ENCODE measurements at regions of chr10 and their contacts with region 1.

Region 1: GRCh38 chr10:29735596-29736318 is 101.0 kb upstream of the SVIL start:
- DNase-seq: no peak
- ATAC-seq: peak; percentile 92
- H3K4me3 ChIP-seq: peak overlapping the region; percentile 53; the same call in 1 of the 2 replicates
- H3K27ac ChIP-seq: no peak overlapping the region
- H3K4me1 ChIP-seq: no peaks in the 10 kb centered on the region
- H3K27me3 ChIP-seq: peaks cover 1 to 10% of the 10 kb centered on the region in 2 experiments
- CTCF ChIP-seq: peak; percentile 68 to 84 (median 81)
- EP300 ChIP-seq: no peak
- POLR2A ChIP-seq: no peak
- RAD21 ChIP-seq: peak; percentile 45

Region 2: DNA sequence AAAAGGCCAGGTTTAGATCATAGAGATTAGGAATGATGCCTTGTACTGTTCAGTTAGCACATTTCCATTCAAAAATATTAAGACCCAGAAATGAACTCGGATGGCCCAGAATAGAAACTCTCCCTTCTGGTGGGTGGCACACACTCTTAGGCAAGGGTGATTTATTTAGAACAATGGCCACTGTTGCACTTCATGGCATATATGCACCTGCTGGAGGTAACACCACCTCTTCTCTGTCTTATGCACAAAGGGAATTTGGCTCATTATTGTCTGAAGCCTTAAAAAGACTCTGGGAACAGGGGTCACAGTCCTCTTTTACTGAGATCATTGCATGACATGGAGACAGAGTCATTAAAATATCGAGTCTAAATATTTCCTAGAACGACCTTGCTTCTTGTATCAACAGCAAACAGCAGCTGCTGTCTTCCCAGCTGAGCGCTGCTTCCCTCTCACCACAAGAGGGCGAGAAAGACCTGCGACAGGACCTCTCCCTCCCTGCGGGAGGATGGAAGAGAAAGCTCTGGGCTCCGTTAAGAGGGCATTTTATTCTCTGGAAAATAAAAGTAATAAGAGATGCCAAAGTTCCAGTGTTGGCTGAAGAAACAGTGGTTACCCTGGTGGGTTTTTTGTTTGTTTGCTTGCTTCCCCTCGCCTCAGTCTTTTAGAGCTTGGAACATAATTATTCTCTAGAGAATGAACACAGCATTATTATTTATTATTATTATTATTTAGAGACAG is 1072.0 kb before region 1 on chr10:
- CTCF ChIA-PET with region 1: no interaction called
- POLR2A ChIA-PET with region 1: no interaction called
- RAD21 ChIA-PET with region 1: no interaction called
- SMC1A ChIA-PET with region 1: no interaction called
- in situ Hi-C with region 1: no loop called
- intact Hi-C with region 1: no loop called
- DNase-seq: no peak
- ATAC-seq: peak; percentile 97
- H3K4me3 ChIP-seq: no peak overlapping the region
- H3K27ac ChIP-seq: no peak overlapping the region
- H3K4me1 ChIP-seq: no peaks in the 10 kb centered on the region
- H3K27me3 ChIP-seq: peaks cover 2 to 5% of the 10 kb centered on the region in 2 experiments
- CTCF ChIP-seq: peak; percentile 95 to 96 (median 96)
- EP300 ChIP-seq: no peak
- POLR2A ChIP-seq: no peak
- RAD21 ChIP-seq: peak; percentile 96

Region 3: GRCh38 chr10:29443745-29444523 is 291.8 kb before region 1 on chr10:
- CTCF ChIA-PET with region 1: interaction called, 3 read pairs
- POLR2A ChIA-PET with region 1: no interaction called
- RAD21 ChIA-PET with region 1: no interaction called
- SMC1A ChIA-PET with region 1: no interaction called
- in situ Hi-C with region 1: no loop called
- intact Hi-C with region 1: loop called (anchors 5 kb)
- DNase-seq: no peak
- ATAC-seq: peak; percentile 41
- H3K4me3 ChIP-seq: no peak overlapping the region
- H3K27ac ChIP-seq: no peak overlapping the region
- H3K4me1 ChIP-seq: no peaks in the 10 kb centered on the region
- H3K27me3 ChIP-seq: no peaks in the 10 kb centered on the region
- CTCF ChIP-seq: no peak
- EP300 ChIP-seq: no peak
- POLR2A ChIP-seq: no peak
- RAD21 ChIP-seq: no peak

Region 4: GRCh38 chr10:29508554-29509244 is 227.1 kb before region 1 on chr10:
- CTCF ChIA-PET with region 1: interaction called, 13 read pairs
- POLR2A ChIA-PET with region 1: no interaction called
- RAD21 ChIA-PET with region 1: interaction called, 3 read pairs
- SMC1A ChIA-PET with region 1: no interaction called
- in situ Hi-C with region 1: no loop called
- intact Hi-C with region 1: no loop called
- DNase-seq: no peak
- ATAC-seq: no peak; the same call in 2 of the 3 replicates
- H3K4me3 ChIP-seq: no peak overlapping the region
- H3K27ac ChIP-seq: no peak overlapping the region
- H3K4me1 ChIP-seq: no peaks in the 10 kb centered on the region
- H3K27me3 ChIP-seq: no peaks in the 10 kb centered on the region
- CTCF ChIP-seq: no peak
- EP300 ChIP-seq: no peak
- POLR2A ChIP-seq: no peak
- RAD21 ChIP-seq: no peak

Region 5: GRCh38 chr10:29618341-29619171 is 117.2 kb before region 1 on chr10:
- CTCF ChIA-PET with region 1: interaction called, 4 read pairs
- POLR2A ChIA-PET with region 1: no interaction called
- RAD21 ChIA-PET with region 1: interaction called, 3 read pairs
- SMC1A ChIA-PET with region 1: interaction called, 10 read pairs
- in situ Hi-C with region 1: no loop called
- intact Hi-C with region 1: no loop called
- DNase-seq: no peak
- ATAC-seq: peak; percentile 36
- H3K4me3 ChIP-seq: no peak overlapping the region
- H3K27ac ChIP-seq: no peak overlapping the region
- H3K4me1 ChIP-seq: no peaks in the 10 kb centered on the region
- H3K27me3 ChIP-seq: no peaks in the 10 kb centered on the region
- CTCF ChIP-seq: no peak
- EP300 ChIP-seq: no peak
- POLR2A ChIP-seq: no peak
- RAD21 ChIP-seq: no peak

Region 6: DNA sequence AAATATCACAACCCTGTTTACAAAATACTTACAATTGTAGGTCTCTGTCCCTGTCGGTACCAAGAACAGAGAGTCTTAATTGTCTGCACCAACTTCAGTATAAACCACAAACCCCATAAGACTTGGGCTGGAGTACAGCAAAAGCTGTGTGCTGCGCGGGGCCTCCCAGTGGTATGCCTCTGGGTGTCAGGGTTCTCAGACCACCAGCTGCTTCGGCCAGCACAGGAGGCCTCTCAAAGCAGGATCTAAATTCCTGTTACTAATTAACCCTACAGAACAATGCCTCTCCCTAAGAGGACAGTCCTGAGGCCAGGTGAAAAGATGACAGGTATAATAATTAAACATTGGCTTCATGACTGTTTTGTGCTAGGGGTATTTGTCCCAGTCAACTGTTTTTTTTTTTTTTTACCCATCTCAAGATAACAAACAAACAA is 100.0 kb before region 1 on chr10:
- CTCF ChIA-PET with region 1: no interaction called
- POLR2A ChIA-PET with region 1: no interaction called
- RAD21 ChIA-PET with region 1: interaction called, 13 read pairs
- SMC1A ChIA-PET with region 1: interaction called, 6 read pairs
- in situ Hi-C with region 1: no loop called
- intact Hi-C with region 1: loop called (anchors 2 kb)
- DNase-seq: peak; percentile 27
- ATAC-seq: peak; percentile 86
- H3K4me3 ChIP-seq: no peak overlapping the region
- H3K27ac ChIP-seq: no peak overlapping the region
- H3K4me1 ChIP-seq: no peaks in the 10 kb centered on the region
- H3K27me3 ChIP-seq: no peaks in the 10 kb centered on the region
- CTCF ChIP-seq: no peak
- EP300 ChIP-seq: no peak
- POLR2A ChIP-seq: no peak
- RAD21 ChIP-seq: no peak

Region 7: GRCh38 chr10:29646238-29646902 is 89.4 kb before region 1 on chr10:
- CTCF ChIA-PET with region 1: interaction called, 3 read pairs
- POLR2A ChIA-PET with region 1: interaction called, 3 read pairs
- RAD21 ChIA-PET with region 1: interaction called, 5 read pairs
- SMC1A ChIA-PET with region 1: interaction called, 12 read pairs
- in situ Hi-C with region 1: no loop called
- intact Hi-C with region 1: no loop called
- DNase-seq: no peak
- ATAC-seq: peak; percentile 23
- H3K4me3 ChIP-seq: no peak overlapping the region
- H3K27ac ChIP-seq: no peak overlapping the region
- H3K4me1 ChIP-seq: no peaks in the 10 kb centered on the region
- H3K27me3 ChIP-seq: no peaks in the 10 kb centered on the region
- CTCF ChIP-seq: no peak
- EP300 ChIP-seq: no peak
- POLR2A ChIP-seq: no peak
- RAD21 ChIP-seq: no peak

Region 8: DNA sequence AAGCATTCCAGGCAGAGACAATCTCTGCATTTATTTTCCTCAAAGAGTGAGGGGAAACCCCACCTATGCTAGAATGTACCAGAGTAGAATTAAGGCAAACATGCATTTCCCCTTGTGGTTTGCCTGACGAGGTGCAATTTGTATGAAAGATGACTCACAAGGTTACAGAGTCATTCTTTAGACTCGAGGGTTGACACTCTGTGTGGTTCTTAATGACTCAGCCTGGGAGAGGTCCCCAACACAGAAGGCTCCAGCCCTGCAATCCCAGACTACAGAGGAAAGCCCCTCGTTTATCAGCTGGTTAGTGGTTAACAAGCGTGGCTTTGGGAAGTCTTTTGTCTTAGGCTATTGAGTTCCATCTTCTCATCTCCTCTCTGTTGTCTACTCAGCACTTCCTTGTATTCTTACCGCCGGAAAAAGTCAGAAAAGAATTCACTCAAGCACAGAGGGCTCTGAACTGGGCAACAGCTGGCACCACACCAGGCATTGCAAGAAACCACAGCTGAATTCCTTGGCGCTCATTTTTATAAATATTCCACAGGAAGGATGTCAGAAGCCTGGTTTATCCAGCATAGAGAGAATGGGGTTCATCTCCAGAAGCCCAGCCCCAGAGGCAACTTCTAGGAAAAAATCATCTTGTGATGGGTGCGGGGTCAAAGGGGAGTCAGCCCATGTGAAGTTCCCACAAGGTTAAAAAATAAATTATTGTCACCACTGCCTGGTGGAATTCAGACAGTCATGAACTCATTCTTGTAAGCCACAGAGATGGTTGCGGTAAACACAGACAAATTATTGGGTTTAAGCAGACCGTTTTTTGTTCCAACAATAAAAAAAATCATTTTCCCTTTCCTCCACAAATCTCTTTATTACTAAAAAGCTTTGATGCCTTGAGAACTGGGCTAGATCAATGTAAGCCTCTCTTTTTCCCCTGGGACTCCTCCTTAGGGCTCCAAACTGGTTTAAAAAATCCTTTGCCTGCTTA is 76.5 kb before region 1 on chr10:
- CTCF ChIA-PET with region 1: no interaction called
- POLR2A ChIA-PET with region 1: no interaction called
- RAD21 ChIA-PET with region 1: interaction called, 3 read pairs
- SMC1A ChIA-PET with region 1: interaction called, 3 read pairs
- in situ Hi-C with region 1: no loop called
- intact Hi-C with region 1: loop called (anchors 1 kb)
- DNase-seq: peak; percentile 92
- ATAC-seq: peak; percentile 97
- H3K4me3 ChIP-seq: no peak overlapping the region
- H3K27ac ChIP-seq: no peak overlapping the region
- H3K4me1 ChIP-seq: no peaks in the 10 kb centered on the region
- H3K27me3 ChIP-seq: no peaks in the 10 kb centered on the region
- CTCF ChIP-seq: no peak
- EP300 ChIP-seq: peak; percentile 88 to 97; a peak in 3 of 4 replicates
- POLR2A ChIP-seq: no peak
- RAD21 ChIP-seq: no peak

Region 9: DNA sequence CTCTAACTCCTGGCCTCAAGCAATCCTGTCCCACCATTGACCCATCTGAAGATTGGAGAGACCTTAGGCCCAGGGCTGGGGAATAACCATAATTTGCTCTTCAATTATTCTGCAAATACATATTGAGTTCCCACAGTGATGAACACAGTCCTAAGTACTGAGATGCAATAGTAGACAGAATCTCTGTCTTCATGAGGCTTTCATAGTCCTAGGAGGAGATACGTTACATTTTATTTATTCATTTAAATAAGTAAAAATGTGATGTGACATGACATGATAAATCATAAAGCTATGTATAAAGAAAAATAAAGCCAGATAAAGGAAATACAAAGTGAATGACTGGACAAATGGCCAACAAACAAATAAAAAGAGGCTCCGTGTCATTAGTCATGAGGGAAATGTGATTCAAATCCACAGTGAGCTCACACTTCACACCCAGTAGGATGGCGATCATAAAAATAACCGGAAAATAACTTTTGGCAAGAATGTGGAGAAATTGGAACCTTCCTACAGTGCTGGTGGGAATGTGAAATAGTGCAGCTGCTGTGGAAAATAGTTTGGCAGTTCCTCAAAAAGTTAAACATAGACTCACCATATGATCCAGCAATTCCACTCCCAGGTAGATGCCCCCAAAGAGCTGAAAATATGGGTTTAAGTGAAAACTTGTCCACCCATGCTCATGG is 375.7 kb after region 1 on chr10:
- CTCF ChIA-PET with region 1: no interaction called
- POLR2A ChIA-PET with region 1: no interaction called
- RAD21 ChIA-PET with region 1: no interaction called
- SMC1A ChIA-PET with region 1: no interaction called
- in situ Hi-C with region 1: no loop called
- intact Hi-C with region 1: no loop called
- DNase-seq: no peak
- ATAC-seq: no peak
- H3K4me3 ChIP-seq: no peak overlapping the region
- H3K27ac ChIP-seq: no peak overlapping the region
- H3K4me1 ChIP-seq: no peaks in the 10 kb centered on the region
- H3K27me3 ChIP-seq: no peaks in the 10 kb centered on the region
- CTCF ChIP-seq: no peak
- EP300 ChIP-seq: no peak
- POLR2A ChIP-seq: no peak
- RAD21 ChIP-seq: no peak

Measured in GM12878 (cell line).